ENCODE measurements at regions of chr10 and their contacts with region 1.

Region 1: GRCh38 chr10:110279407-110279986 is 25.2 kb downstream of the SMNDC1 start:
- DNase-seq: peak in 4 of 10 donors; percentile 52 to 70 (median 56)

Region 2: GRCh38 chr10:109883859-109884771 is 395.4 kb before region 1 on chr10:
- intact Hi-C with region 1: loop called (anchors 10 kb)
- DNase-seq: peak; percentile 61 to 97 (median 72)

Region 3: GRCh38 chr10:110210674-110211464 is 68.6 kb before region 1 on chr10:
- intact Hi-C with region 1: loop called (anchors 5 kb)
- DNase-seq: peak; percentile 98 to 100 (median 99)